ENCODE measurements at regions of chr15 and their contacts with region 1.

Region 1: GRCh38 chr15:87245592-87245991 is 1010.9 kb downstream of the NTRK3 start:
- DNase-seq: no peak
- ATAC-seq: no peak
- H3K4me3 ChIP-seq: no peak overlapping the region
- H3K27ac ChIP-seq: no peak overlapping the region
- H3K4me1 ChIP-seq: no peaks in the 10 kb centered on the region
- H3K27me3 ChIP-seq: no peaks in the 10 kb centered on the region

Region 2: GRCh38 chr15:86347245-86347644 is 898.3 kb before region 1 on chr15:
- intact Hi-C with region 1: no loop called
- DNase-seq: no peak
- ATAC-seq: no peak
- H3K4me3 ChIP-seq: no peak overlapping the region
- H3K27ac ChIP-seq: no peak overlapping the region
- H3K4me1 ChIP-seq: no peaks in the 10 kb centered on the region
- H3K27me3 ChIP-seq: peaks cover 0 to 2% of the 10 kb centered on the region in 2 donors

Region 3: DNA sequence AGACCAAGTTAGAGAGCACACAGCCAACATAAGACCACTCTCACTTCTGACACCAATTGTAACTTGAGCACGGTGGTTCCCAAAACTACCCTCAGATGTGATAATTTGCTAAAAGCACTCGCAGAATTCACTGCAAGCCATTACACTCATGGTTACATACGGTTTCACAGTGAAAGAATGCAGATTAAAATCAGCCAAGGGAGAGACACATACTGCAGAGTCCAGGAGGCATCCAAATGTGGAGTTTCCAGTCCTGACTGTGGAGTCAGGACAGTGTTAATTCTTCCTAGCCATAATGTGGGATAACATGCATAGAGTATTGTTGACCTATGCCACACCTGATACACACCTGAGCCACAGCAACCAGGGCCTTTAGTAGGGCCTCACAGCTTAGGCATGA is 54.6 kb after region 1 on chr15:
- intact Hi-C with region 1: loop called in 1 of 2 experiments (anchors 10 kb)
- DNase-seq: no peak
- ATAC-seq: no peak
- H3K4me3 ChIP-seq: no peak overlapping the region
- H3K27ac ChIP-seq: no peak overlapping the region
- H3K4me1 ChIP-seq: no peaks in the 10 kb centered on the region
- H3K27me3 ChIP-seq: no peaks in the 10 kb centered on the region